Activated CD8-positive, alpha-beta T cell treated with anti-CD3 and anti-CD28 coated beads, Interleukin-2, amount 10 ng/mL, durations not matched to agents 7 days and 5 days (primary cell): ENCODE measurements at regions of chr10 and their contacts with region 1.

Region 1: GRCh38 chr10:99845837-99846382 is 63.5 kb downstream of the ABCC2 start:
- DNase-seq: peak; percentile 84
- ATAC-seq: peak; percentile 91
- H3K4me3 Mint-ChIP-seq: peak overlapping the region; percentile 43
- H3K27ac Mint-ChIP-seq: no peak overlapping the region
- H3K4me1 Mint-ChIP-seq: peaks cover 12% of the 10 kb centered on the region
- H3K27me3 Mint-ChIP-seq: no peaks in the 10 kb centered on the region

Region 2: GRCh38 chr10:99732033-99732912 is 113.6 kb before region 1 on chr10 and contains the starts of genes COX15 and CUTC:
- CTCF ChIA-PET with region 1: interaction called, 11 read pairs
- POLR2A ChIA-PET with region 1: no interaction called
- DNase-seq: peak; percentile 97
- ATAC-seq: peak; percentile 95
- H3K4me3 Mint-ChIP-seq: peak within 1 kb of the TSS; percentile 100
- H3K27ac Mint-ChIP-seq: peak within 1 kb of the TSS; percentile 99
- H3K4me1 Mint-ChIP-seq: peaks cover 26% of the 10 kb centered on the region
- H3K27me3 Mint-ChIP-seq: no peaks in the 10 kb centered on the region
- total RNA-seq, gene COX15: 36.1 to 39.3 TPM
- total RNA-seq, gene CUTC: 24.0 to 25.8 TPM

Region 3: DNA sequence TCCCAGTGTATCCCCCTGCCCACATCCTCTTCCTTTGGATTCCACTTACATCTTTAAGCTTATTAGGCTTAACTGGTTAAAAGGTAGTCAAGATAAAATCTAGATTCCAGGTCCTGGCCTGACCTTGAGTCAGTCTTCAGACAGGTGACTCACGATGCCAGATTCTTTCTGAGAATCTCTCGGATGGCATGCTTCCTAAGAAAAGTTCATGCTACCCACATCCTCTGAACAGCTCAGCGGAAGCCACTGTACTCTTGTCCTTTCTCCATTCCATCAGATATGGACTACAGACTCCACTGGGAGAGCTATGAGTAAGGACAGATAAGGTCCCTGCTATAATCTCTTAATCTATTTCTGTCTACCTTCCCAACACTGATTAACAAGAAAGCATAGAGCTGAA is 120.4 kb after region 1 on chr10:
- CTCF ChIA-PET with region 1: interaction called, 22 read pairs
- POLR2A ChIA-PET with region 1: no interaction called
- DNase-seq: no peak
- ATAC-seq: no peak
- H3K4me3 Mint-ChIP-seq: no peak overlapping the region
- H3K27ac Mint-ChIP-seq: no peak overlapping the region
- H3K4me1 Mint-ChIP-seq: peaks cover 2% of the 10 kb centered on the region
- H3K27me3 Mint-ChIP-seq: no peaks in the 10 kb centered on the region

Region 4: GRCh38 chr10:100020142-100020885 is 174.4 kb after region 1 on chr10:
- CTCF ChIA-PET with region 1: interaction called, 10 read pairs
- POLR2A ChIA-PET with region 1: no interaction called
- DNase-seq: peak; percentile 29
- ATAC-seq: peak; percentile 68
- H3K4me3 Mint-ChIP-seq: no peak overlapping the region
- H3K27ac Mint-ChIP-seq: no peak overlapping the region
- H3K4me1 Mint-ChIP-seq: peaks cover 15% of the 10 kb centered on the region
- H3K27me3 Mint-ChIP-seq: peaks cover 10% of the 10 kb centered on the region

Region 5: GRCh38 chr10:100046021-100046486 is 200.1 kb after region 1 on chr10:
- CTCF ChIA-PET with region 1: interaction called, 226 read pairs
- POLR2A ChIA-PET with region 1: no interaction called
- DNase-seq: peak; percentile 87
- ATAC-seq: peak; percentile 82
- H3K4me3 Mint-ChIP-seq: no peak overlapping the region
- H3K27ac Mint-ChIP-seq: no peak overlapping the region
- H3K4me1 Mint-ChIP-seq: no peaks in the 10 kb centered on the region
- H3K27me3 Mint-ChIP-seq: peaks cover 17% of the 10 kb centered on the region

Region 6: GRCh38 chr10:100827819-100828737 is 982.2 kb after region 1 on chr10:
- CTCF ChIA-PET with region 1: no interaction called
- POLR2A ChIA-PET with region 1: no interaction called
- DNase-seq: peak; percentile 48
- ATAC-seq: peak; percentile 57
- H3K4me3 Mint-ChIP-seq: peak overlapping the region; percentile 66
- H3K27ac Mint-ChIP-seq: no peak overlapping the region
- H3K4me1 Mint-ChIP-seq: peaks cover 39% of the 10 kb centered on the region
- H3K27me3 Mint-ChIP-seq: peaks cover 82% of the 10 kb centered on the region